PC-9 (cell line): ENCODE measurements at regions of chr1 and their contacts with region 1.

Region 1: DNA sequence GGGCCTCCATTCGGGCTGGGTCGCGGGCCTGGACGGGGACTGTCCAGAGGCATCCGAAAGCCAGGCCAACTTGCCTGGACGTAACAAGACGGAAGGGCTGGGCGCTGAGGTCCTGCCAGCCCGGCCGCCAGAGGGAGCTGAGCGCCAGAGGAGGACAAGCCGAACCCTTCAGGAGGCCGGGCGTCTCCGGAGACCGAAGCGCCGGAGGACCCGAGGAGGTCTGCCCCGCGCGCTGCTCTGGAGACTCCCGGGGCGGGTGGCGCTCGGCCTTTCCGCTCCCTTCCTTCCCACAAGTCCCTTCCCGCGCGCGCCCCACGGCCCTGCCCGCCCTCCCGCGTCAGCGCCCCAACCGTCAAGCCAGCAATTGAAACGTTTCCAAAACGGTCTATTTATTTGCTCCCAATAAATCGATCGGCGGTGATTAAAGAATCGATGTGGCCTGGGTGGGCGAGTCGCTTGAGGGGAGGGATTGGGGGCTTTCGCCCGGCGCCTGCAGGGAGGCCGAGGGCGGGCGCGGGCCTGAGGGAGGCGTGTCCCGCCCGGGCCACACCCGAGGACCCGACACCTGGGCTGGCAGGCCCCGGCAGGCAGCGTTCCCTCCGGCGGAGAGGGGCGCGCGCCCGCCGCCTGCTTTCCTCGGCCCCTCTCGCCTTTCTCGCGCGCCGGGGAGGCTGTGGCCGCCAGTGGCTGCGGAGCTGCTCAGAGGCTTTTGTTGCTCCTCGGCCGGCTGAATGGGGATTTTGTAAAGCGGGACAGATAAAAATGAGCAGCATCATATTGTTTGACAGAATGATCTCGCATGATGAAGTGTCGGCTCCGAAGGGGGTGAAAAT is 5.2 kb upstream of the FOXD3 start:
- DNase-seq: peak; percentile 68 to 87
- H3K4me3 ChIP-seq: peak overlapping the region; percentile 70
- H3K27ac ChIP-seq: no peak overlapping the region
- H3K4me1 ChIP-seq: peaks cover 6% of the 10 kb centered on the region
- H3K27me3 ChIP-seq: peaks cover 21% of the 10 kb centered on the region; the same call in 1 of the 2 replicates
- CTCF ChIP-seq: peak; percentile 77

Region 2: GRCh38 chr1:63522891-63523728 is 205.9 kb after region 1 on chr1 and contains the starts of genes EFCAB7 and ITGB3BP:
- CTCF ChIA-PET with region 1: no interaction called
- POLR2A ChIA-PET with region 1: no interaction called
- intact Hi-C with region 1: loop called (anchors 5 kb)
- DNase-seq: peak; percentile 86 to 90
- H3K4me3 ChIP-seq: peak within 1 kb of the TSS; percentile 98
- H3K27ac ChIP-seq: peak within 1 kb of the TSS; percentile 67
- H3K4me1 ChIP-seq: peaks cover 24% of the 10 kb centered on the region
- H3K27me3 ChIP-seq: no peaks in the 10 kb centered on the region
- CTCF ChIP-seq: no peak
- total RNA-seq, gene EFCAB7: 7.7 and 11.2 TPM in 2 replicates
- total RNA-seq, gene ITGB3BP: 61.7 and 79.2 TPM in 2 replicates